ENCODE measurements at regions of chr13 and their contacts with region 1.

Region 1: DNA sequence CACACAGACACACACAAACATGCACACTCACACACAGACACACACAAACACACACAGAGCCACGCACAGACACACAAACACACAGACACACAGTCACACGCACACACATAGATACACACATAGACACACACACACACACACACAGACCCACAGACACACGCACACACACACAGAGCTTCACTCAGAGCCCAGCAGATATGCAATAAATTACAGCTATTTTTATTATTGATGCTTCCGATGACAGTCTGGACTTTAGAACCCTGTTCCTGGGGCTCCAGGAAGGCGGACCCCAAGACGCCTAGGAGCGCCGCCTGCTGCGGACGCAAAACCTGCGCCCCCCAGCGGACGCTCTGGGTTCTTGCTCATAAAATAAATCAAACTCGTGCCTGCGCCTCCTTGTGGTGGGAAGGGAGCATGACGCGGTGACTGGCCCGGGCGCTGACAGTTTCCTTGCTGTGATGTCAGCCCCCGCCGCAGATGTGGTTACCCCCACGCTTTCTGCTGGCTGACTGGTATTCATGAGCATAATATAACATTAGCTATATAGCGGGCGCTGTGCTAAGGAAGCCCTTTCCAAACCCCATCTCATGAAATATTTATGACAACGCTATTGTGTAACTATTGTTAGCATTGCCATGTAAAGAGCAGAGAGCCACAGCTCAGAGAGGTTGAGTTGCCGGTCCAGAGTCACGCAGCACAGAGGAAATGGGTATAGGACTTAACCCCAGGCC is 64.4 kb upstream of the TM9SF2 start:
- DNase-seq: peak; percentile 98
- H3K4me3 Mint-ChIP-seq: peak overlapping the region; percentile 5
- H3K27ac Mint-ChIP-seq: peak overlapping the region; percentile 17
- H3K4me1 Mint-ChIP-seq: peaks cover 58% of the 10 kb centered on the region
- H3K27me3 Mint-ChIP-seq: peaks cover 31% of the 10 kb centered on the region

Region 2: GRCh38 chr13:99057310-99057975 is 379.4 kb before region 1 on chr13:
- intact Hi-C with region 1: loop called (anchors 10 kb)
- DNase-seq: no peak
- H3K4me3 Mint-ChIP-seq: no peak overlapping the region
- H3K27ac Mint-ChIP-seq: no peak overlapping the region
- H3K4me1 Mint-ChIP-seq: peaks cover 54% of the 10 kb centered on the region
- H3K27me3 Mint-ChIP-seq: no peaks in the 10 kb centered on the region

Region 3: DNA sequence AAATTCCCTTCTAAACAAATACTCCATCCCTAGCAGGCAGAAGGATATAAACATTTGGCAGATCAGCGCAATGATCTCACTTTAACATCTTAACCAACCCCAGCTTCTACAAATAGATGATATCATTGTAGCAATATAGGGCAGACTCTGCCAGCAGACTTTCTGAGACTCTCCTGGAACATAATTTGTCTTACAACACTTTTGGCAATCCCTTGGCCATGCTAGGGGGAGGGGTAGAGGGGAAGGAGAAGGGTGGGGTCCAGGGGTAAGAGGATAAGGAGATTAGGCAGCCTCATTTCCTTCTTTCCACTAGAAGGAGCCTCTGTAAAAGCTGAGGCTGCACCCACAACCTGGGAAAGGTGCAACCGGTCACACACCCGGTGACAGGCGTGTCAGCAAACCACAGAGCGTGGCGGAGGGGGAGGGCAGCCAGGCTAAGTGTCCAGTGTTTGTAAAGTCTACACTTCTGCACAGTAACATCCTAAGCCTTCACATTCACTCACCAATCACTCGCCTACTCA is 244.9 kb before region 1 on chr13:
- intact Hi-C with region 1: no loop called
- DNase-seq: no peak
- H3K4me3 Mint-ChIP-seq: no peak overlapping the region
- H3K27ac Mint-ChIP-seq: no peak overlapping the region
- H3K4me1 Mint-ChIP-seq: peaks cover 6% of the 10 kb centered on the region
- H3K27me3 Mint-ChIP-seq: peaks cover 3% of the 10 kb centered on the region

Region 4: GRCh38 chr13:99214232-99214631 is 222.6 kb before region 1 on chr13:
- intact Hi-C with region 1: loop called (anchors 2 kb)
- DNase-seq: peak; percentile 78
- H3K4me3 Mint-ChIP-seq: peak overlapping the region; percentile 83
- H3K27ac Mint-ChIP-seq: peak overlapping the region; percentile 92
- H3K4me1 Mint-ChIP-seq: peaks cover 68% of the 10 kb centered on the region
- H3K27me3 Mint-ChIP-seq: no peaks in the 10 kb centered on the region

Region 5: GRCh38 chr13:99307648-99308339 is 129.1 kb before region 1 on chr13:
- intact Hi-C with region 1: loop called (anchors 1 kb)
- DNase-seq: peak; percentile 87
- H3K4me3 Mint-ChIP-seq: peak overlapping the region; percentile 84
- H3K27ac Mint-ChIP-seq: peak overlapping the region; percentile 88
- H3K4me1 Mint-ChIP-seq: peaks cover 73% of the 10 kb centered on the region
- H3K27me3 Mint-ChIP-seq: no peaks in the 10 kb centered on the region

Region 6: DNA sequence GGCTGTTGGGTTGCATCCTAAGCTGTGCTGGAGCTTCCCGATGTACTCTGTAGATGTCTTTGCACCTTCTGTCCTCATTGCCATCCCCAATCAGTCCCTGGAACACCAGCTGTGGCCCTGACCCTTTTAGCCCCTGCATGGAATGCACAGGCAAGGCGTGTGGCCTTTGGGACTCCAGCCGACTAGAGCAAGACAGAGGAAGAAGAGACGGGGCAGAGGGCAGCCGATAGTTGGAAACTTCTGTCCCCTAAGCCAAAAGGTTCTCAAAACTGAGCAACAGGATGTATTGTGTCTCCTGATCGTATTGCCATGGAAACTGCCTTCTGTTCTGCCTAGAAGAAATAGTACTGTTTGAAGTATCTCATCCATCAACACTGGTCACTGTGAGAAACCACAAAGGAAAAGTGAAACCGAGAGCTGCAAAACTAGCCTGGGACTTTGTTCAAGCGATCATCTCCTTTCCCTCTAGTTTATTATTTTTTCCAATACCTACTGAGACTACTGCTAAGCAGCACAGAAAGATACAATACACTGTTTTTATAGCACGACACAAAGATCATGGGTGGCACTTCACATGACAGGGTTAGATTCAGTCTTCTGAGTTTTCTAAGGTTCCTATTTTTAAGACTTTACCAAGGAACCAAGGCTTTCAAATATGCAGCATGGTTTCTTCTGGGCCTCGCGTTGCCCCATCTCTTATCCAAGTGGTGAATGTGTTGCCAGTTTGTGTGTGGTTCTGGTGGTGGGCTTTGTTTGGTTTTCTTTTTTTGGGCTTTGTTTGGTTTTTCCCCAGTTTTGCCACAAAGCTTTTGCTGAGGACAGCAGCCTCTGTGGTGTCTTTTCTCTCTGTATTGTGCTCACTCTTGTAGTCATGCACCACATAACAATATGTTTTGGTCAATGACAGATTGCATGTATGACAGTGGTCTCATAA is 80.4 kb before region 1 on chr13:
- intact Hi-C with region 1: loop called (anchors 1 kb)
- DNase-seq: peak; percentile 94
- H3K4me3 Mint-ChIP-seq: peak overlapping the region; percentile 83
- H3K27ac Mint-ChIP-seq: peak overlapping the region; percentile 99
- H3K4me1 Mint-ChIP-seq: peaks cover 92% of the 10 kb centered on the region
- H3K27me3 Mint-ChIP-seq: no peaks in the 10 kb centered on the region

Region 7: GRCh38 chr13:99425485-99426341 is 11.1 kb before region 1 on chr13:
- intact Hi-C with region 1: loop called (anchors 1 kb)
- DNase-seq: peak; percentile 86
- H3K4me3 Mint-ChIP-seq: peak overlapping the region; percentile 84
- H3K27ac Mint-ChIP-seq: peak overlapping the region; percentile 92
- H3K4me1 Mint-ChIP-seq: peaks cover 53% of the 10 kb centered on the region
- H3K27me3 Mint-ChIP-seq: peaks cover 2% of the 10 kb centered on the region

Region 8: DNA sequence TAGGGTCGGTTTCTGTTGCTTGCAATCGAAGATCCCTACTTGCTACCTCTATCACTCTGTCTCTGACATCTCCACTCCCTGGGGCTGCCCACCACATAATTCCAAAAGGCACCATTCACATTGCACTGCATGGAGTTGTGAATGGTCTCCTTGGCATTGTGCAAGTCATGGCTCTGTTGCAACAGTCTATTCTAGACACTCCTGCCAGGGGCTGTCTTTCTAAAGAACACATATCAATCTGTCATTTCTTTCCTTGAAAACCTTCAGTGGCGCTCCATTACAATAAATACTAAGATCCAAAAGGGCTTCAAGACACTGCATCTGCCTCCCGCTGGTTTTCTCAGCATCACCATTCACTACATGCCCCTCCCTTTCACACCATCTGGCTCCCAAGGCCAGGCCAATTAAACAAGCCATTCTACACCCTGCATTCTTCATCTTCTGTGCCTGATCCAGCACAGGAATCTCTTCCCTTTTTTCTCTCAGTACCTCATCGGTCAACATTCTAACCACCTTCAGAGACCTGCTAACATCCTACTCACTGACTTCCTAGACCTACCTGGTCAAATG is 32.2 kb after region 1 on chr13:
- intact Hi-C with region 1: no loop called
- DNase-seq: no peak
- H3K4me3 Mint-ChIP-seq: no peak overlapping the region
- H3K27ac Mint-ChIP-seq: peak overlapping the region; percentile 30
- H3K4me1 Mint-ChIP-seq: peaks cover 20% of the 10 kb centered on the region
- H3K27me3 Mint-ChIP-seq: peaks cover 13% of the 10 kb centered on the region